ENCODE measurements at regions of chr17 and their contacts with region 1.

Region 1: DNA sequence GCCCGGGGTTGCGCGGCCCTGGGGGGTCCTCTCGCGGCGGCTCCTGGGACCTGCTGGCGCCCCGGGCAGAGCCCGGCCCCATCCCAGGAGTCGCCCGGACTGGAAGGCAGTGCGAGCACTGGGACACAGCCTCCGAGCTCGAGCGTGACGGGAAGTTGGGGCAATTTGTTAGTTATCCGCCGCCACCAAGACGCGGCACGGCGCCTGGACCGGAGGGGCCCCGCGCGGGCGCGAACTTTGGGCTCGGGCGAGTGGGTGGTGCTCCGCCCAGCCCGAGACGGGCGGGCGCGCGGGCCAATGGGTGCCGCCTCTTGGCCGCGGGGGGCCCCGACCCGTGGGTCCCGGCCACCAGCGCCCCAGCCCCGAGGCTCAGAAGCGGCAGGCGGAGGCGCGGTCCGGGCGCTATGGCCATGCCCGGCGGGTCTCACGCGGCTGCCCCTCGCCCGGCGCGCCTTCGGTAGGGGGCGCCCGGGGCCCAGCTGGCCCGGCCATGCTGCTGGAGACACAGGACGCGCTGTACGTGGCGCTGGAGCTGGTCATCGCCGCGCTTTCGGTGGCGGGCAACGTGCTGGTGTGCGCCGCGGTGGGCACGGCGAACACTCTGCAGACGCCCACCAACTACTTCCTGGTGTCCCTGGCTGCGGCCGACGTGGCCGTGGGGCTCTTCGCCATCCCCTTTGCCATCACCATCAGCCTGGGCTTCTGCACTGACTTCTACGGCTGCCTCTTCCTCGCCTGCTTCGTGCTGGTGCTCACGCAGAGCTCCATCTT is at the start of gene ADORA2B:
- DNase-seq: peak; percentile 73
- ATAC-seq: peak; percentile 88
- H3K4me3 Mint-ChIP-seq: peak within 1 kb of the TSS; percentile 76
- H3K27ac Mint-ChIP-seq: peak within 1 kb of the TSS; percentile 61
- H3K4me1 Mint-ChIP-seq: peaks cover 11% of the 10 kb centered on the region
- H3K27me3 Mint-ChIP-seq: peaks cover 27% of the 10 kb centered on the region
- CTCF ChIP-seq: peak; percentile 47
- total RNA-seq, gene ADORA2B: 4.2 to 5.4 TPM

Region 2: DNA sequence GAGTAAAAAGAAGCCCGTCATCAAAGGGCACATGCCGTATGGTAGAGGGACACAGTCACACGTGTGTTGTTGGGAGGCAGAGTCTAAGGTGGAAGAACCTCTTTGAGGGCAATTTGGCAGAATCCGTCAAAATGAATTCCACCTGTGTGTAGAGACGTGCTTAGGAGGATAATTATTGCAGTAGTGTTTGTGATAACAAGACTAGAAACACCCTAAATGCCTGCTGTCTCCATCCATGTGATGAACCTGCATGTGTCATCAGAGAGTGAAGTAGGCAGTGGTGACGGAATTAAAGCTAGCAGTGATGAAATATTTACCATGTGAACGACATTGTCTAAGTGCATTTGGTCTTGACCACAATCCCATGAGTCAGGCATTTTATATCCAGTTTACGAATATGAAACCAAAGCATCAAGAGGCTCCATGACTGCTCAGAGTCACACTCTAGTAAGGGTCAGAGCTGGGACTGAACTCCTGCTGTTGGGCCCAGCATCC is 61.3 kb before region 1 on chr17:
- CTCF ChIA-PET with region 1: no interaction called
- POLR2A ChIA-PET with region 1: no interaction called
- intact Hi-C with region 1: no loop called
- DNase-seq: no peak
- ATAC-seq: peak; percentile 35
- H3K4me3 Mint-ChIP-seq: no peak overlapping the region
- H3K27ac Mint-ChIP-seq: no peak overlapping the region
- H3K4me1 Mint-ChIP-seq: peaks cover 23% of the 10 kb centered on the region
- H3K27me3 Mint-ChIP-seq: no peaks in the 10 kb centered on the region
- CTCF ChIP-seq: no peak

Region 3: DNA sequence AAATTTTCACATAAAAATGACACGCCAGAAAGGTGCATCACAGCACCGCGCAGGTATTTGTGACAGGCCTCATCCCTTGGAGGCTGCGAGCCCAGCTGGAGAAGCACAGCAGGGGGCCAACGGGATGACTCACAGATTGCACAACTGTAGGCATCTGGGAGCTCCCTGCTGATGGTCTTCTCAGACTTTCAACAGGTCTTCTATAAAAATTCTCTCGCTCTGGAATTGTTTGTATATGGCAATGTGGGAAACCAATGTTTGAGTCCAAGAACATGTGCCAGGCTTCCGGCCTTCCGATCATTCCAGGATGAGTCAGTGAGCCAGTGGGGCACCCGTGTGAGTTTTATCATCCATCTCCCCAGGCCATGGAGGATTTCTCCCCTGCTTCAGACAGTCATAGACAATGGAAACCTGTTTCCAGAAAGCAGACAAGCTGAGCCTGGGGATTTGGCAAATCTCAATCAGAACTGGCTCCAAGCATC is 24.1 kb before region 1 on chr17:
- CTCF ChIA-PET with region 1: no interaction called
- POLR2A ChIA-PET with region 1: no interaction called
- intact Hi-C with region 1: no loop called
- DNase-seq: no peak
- ATAC-seq: no peak
- H3K4me3 Mint-ChIP-seq: no peak overlapping the region
- H3K27ac Mint-ChIP-seq: no peak overlapping the region
- H3K4me1 Mint-ChIP-seq: no peaks in the 10 kb centered on the region
- H3K27me3 Mint-ChIP-seq: peaks cover 19% of the 10 kb centered on the region
- CTCF ChIP-seq: no peak

Region 4: GRCh38 chr17:15957206-15957605 is 12.3 kb after region 1 on chr17:
- CTCF ChIA-PET with region 1: interaction called, 4 read pairs
- POLR2A ChIA-PET with region 1: interaction called, 19 read pairs
- intact Hi-C with region 1: no loop called
- DNase-seq: peak; percentile 57
- ATAC-seq: peak; percentile 32
- H3K4me3 Mint-ChIP-seq: no peak overlapping the region
- H3K27ac Mint-ChIP-seq: no peak overlapping the region
- H3K4me1 Mint-ChIP-seq: peaks cover 34% of the 10 kb centered on the region
- H3K27me3 Mint-ChIP-seq: peaks cover 14% of the 10 kb centered on the region
- CTCF ChIP-seq: no peak

Region 5: GRCh38 chr17:15999439-16000350 is 54.8 kb after region 1 on chr17 and contains the starts of genes TTC19 and ZSWIM7:
- CTCF ChIA-PET with region 1: interaction called, 14 read pairs
- POLR2A ChIA-PET with region 1: interaction called, 22 read pairs
- intact Hi-C with region 1: no loop called
- DNase-seq: peak; percentile 97
- ATAC-seq: peak; percentile 89
- H3K4me3 Mint-ChIP-seq: peak within 1 kb of the TSS; percentile 96
- H3K27ac Mint-ChIP-seq: peak within 1 kb of the TSS; percentile 96
- H3K4me1 Mint-ChIP-seq: peaks cover 28% of the 10 kb centered on the region
- H3K27me3 Mint-ChIP-seq: no peaks in the 10 kb centered on the region
- CTCF ChIP-seq: no peak
- total RNA-seq, gene TTC19: 24.7 to 26.0 TPM
- total RNA-seq, gene ZSWIM7: 14.5 to 18.2 TPM

Region 6: DNA sequence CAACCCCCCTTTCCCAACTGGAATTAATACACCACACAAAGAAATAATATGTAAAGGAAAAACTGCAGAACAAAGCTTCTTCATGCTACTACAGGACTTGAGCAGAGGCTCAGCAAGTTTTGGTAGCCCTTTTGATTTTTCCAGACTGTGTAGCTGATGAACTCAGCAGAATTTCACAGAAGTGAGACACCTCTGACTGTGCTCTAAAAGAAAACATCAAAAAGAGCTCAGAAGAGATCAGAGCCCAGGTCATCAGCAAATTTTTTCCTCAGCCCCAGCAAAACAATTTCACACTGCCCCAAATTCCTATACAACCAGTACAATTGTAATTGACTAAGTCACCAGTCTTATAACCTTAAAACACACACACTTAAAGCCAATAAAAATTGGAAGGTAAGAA is 92.7 kb after region 1 on chr17:
- CTCF ChIA-PET with region 1: no interaction called
- POLR2A ChIA-PET with region 1: no interaction called
- intact Hi-C with region 1: no loop called
- DNase-seq: no peak
- ATAC-seq: no peak
- H3K4me3 Mint-ChIP-seq: no peak overlapping the region
- H3K27ac Mint-ChIP-seq: peak overlapping the region; percentile 87
- H3K4me1 Mint-ChIP-seq: peaks cover 16% of the 10 kb centered on the region
- H3K27me3 Mint-ChIP-seq: no peaks in the 10 kb centered on the region
- CTCF ChIP-seq: no peak

Measured in activated CD8-positive, alpha-beta T cell treated with anti-CD3 and anti-CD28 coated beads for 36 hours (primary cell).